HEK293 (cell line): ENCODE measurements at regions of chr6 and their contacts with region 1.

Region 1: DNA sequence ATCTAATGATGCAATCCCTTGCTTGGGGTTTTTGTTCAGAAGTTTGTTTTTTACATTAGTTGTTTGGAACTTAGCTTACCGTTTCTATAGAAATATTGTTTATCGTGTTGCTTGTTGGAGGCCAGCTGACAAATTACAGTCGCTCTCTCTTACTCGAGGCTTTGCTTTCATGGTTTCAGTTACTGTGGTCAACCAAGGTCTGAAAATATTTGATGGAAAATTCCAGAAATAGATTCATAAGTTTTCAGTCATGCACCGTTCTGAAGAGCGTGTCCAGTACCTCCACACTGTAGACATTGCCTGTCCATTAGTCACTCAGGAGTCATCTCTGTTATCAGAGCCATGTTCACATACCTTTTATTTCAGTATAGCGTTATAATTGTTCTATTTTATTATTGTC is 47.9 kb downstream of the DEK start:
- H3K4me3 ChIP-seq: no peak overlapping the region
- H3K27ac ChIP-seq: no peak overlapping the region
- H3K4me1 ChIP-seq: no peaks in the 10 kb centered on the region
- CTCF ChIP-seq: no peak

Region 2: GRCh38 chr6:18186033-18186432 is 30.4 kb before region 1 on chr6:
- CTCF ChIA-PET with region 1: no interaction called
- POLR2A ChIA-PET with region 1: no interaction called
- H3K4me3 ChIP-seq: no peak overlapping the region
- H3K27ac ChIP-seq: no peak overlapping the region
- H3K4me1 ChIP-seq: peaks cover 4% of the 10 kb centered on the region; the same call in 1 of the 2 replicates
- CTCF ChIP-seq: no peak

Region 3: GRCh38 chr6:18203786-18204185 is 12.6 kb before region 1 on chr6:
- CTCF ChIA-PET with region 1: no interaction called
- POLR2A ChIA-PET with region 1: interaction called, 11 read pairs
- H3K4me3 ChIP-seq: no peak overlapping the region
- H3K27ac ChIP-seq: no peak overlapping the region
- H3K4me1 ChIP-seq: no peaks in the 10 kb centered on the region
- CTCF ChIP-seq: no peak

Region 4: GRCh38 chr6:18245642-18246041 is 29.2 kb after region 1 on chr6:
- CTCF ChIA-PET with region 1: interaction called, 4 read pairs
- POLR2A ChIA-PET with region 1: interaction called, 13 read pairs
- H3K4me3 ChIP-seq: no peak overlapping the region
- H3K27ac ChIP-seq: no peak overlapping the region
- H3K4me1 ChIP-seq: no peaks in the 10 kb centered on the region
- CTCF ChIP-seq: no peak